Breast epithelium (tissue), 4 donors: ENCODE measurements at regions of chr2 and their contacts with region 1.

Region 1: GRCh38 chr2:225650041-225650440 is 250.5 kb downstream of the NYAP2 start:
- DNase-seq: no peak
- H3K4me3 ChIP-seq: no peak overlapping the region
- H3K27ac ChIP-seq: no peak overlapping the region
- H3K4me1 ChIP-seq: no peaks in the 10 kb centered on the region
- H3K27me3 ChIP-seq: no peaks in the 10 kb centered on the region
- CTCF ChIP-seq: no peak
- POLR2A ChIP-seq: no peak

Region 2: GRCh38 chr2:225932811-225933413 is 282.9 kb after region 1 on chr2:
- intact Hi-C with region 1: no loop called
- DNase-seq: no peak
- H3K4me3 ChIP-seq: no peak overlapping the region
- H3K27ac ChIP-seq: no peak overlapping the region
- H3K4me1 ChIP-seq: no peaks in the 10 kb centered on the region
- H3K27me3 ChIP-seq: no peaks in the 10 kb centered on the region
- CTCF ChIP-seq: no peak
- POLR2A ChIP-seq: no peak

Region 3: GRCh38 chr2:227388537-227389011 is 1738.5 kb after region 1 on chr2:
- intact Hi-C with region 1: loop called (anchors 5 kb)
- DNase-seq: no peak
- H3K4me3 ChIP-seq: no peak overlapping the region
- H3K27ac ChIP-seq: no peak overlapping the region
- H3K4me1 ChIP-seq: no peaks in the 10 kb centered on the region
- H3K27me3 ChIP-seq: no peaks in the 10 kb centered on the region
- CTCF ChIP-seq: no peak
- POLR2A ChIP-seq: no peak